PC-9 (cell line): ENCODE measurements at regions of chr7 and their contacts with region 1.

Region 1: DNA sequence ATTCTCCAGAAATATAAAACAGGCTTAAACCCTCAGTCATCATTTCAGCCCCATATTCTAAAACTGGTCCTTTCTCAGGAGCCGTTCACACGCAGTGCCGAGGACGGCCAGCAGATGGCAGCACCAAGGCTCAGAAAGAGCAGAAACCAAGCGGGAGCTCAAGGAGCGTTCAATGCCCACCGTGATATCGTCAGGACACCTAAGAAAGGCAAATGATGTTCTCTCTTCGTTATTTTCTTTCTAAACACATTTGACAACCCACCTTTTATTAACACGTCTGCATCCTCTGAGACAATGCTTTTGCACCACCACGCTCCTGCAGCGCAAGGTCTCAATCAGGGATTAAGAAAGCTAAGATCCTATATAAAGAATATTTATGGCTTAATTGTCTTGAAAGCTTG is 45.7 kb upstream of the RBM33 start:
- DNase-seq: peak; percentile 52 to 70
- H3K4me3 ChIP-seq: no peak overlapping the region
- H3K27ac ChIP-seq: no peak overlapping the region
- H3K4me1 ChIP-seq: no peaks in the 10 kb centered on the region
- H3K27me3 ChIP-seq: peaks cover 87% of the 10 kb centered on the region
- CTCF ChIP-seq: peak; percentile 100

Region 2: GRCh38 chr7:155380221-155380861 is 218.5 kb before region 1 on chr7:
- CTCF ChIA-PET with region 1: interaction called, 3 read pairs
- POLR2A ChIA-PET with region 1: no interaction called
- intact Hi-C with region 1: loop called (anchors 10 kb)
- DNase-seq: peak; percentile 46 to 55
- H3K4me3 ChIP-seq: no peak overlapping the region
- H3K27ac ChIP-seq: no peak overlapping the region
- H3K4me1 ChIP-seq: no peaks in the 10 kb centered on the region
- H3K27me3 ChIP-seq: peaks cover 100% of the 10 kb centered on the region
- CTCF ChIP-seq: peak; percentile 85

Region 3: GRCh38 chr7:155738652-155739537 is 140.1 kb after region 1 on chr7:
- CTCF ChIA-PET with region 1: interaction called, 3 read pairs
- POLR2A ChIA-PET with region 1: no interaction called
- intact Hi-C with region 1: loop called (anchors 1 kb)
- DNase-seq: peak; percentile 51 to 60
- H3K4me3 ChIP-seq: no peak overlapping the region
- H3K27ac ChIP-seq: no peak overlapping the region
- H3K4me1 ChIP-seq: no peaks in the 10 kb centered on the region
- H3K27me3 ChIP-seq: no peaks in the 10 kb centered on the region
- CTCF ChIP-seq: peak; percentile 84